ENCODE measurements at regions of chr22 and their contacts with region 1.

Region 1: GRCh38 chr22:50119768-50120251 is 30.0 kb downstream of the MOV10L1 start:
- DNase-seq: no peak

Region 2: DNA sequence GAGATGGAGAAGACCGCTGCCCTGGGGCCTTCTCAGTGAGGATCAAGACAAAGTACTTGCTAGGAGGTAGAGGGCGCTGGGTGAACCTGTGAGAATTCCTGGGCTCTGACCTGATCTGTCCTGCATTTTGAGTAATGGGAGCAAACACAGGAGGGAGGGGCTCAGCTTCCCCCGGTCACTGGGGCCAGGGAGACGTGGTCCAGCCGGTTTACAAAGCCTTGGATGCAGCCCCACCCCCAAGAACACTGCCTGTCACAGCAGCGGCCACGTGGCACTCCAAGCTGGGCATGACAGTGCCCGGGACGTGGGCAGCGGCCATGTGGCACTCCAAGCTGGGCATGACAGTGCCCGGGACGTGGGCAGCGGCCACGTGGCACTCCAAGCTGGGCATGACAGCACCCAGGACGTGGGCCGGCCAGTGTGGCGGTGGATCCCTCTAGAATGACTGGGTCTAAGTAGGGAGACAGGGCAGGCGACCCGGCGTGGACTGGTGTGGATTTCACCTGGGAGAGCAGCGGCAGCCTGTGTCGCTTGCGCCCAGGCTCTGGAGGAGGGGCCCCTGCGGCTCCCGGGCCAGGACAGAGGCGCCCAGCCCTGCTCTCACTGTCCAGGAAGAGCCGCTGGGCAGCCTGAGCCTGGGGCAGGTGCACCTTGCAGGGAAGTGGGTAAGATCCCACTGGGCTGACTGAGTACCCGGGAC is 59.2 kb before region 1 on chr22:
- intact Hi-C with region 1: loop called (anchors 10 kb)
- DNase-seq: no peak